ENCODE measurements at regions of chr4 and their contacts with region 1.

Region 1: GRCh38 chr4:89270792-89271191 is 36.8 kb downstream of the GPRIN3 start:
- DNase-seq: no peak
- H3K4me3 Mint-ChIP-seq: no peak overlapping the region
- H3K27ac Mint-ChIP-seq: peak overlapping the region; percentile 55
- H3K4me1 Mint-ChIP-seq: peaks cover 82% of the 10 kb centered on the region
- H3K27me3 Mint-ChIP-seq: no peaks in the 10 kb centered on the region

Region 2: DNA sequence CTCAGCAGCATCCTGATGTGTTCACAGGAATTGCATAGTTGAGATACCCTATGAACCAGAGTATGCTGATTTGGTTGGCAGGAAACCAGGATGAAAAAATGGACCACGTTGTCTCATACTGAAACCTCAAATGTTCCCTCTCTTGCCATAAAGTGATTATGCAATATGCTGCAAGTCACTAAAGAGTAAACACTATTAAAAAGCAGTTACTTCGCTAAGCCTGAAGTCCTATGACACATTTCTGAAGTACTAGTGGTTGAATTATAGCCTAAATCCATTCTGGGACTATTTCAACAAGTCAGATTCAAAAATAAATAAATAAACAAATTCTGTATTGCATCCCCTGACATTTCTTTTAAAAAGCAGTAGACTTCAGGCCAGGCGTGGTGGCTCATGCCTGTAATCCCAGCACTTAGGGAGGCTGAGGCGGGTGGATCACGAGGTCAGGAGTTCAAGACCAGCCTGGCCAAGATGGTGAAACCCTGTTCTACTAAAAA is 467.1 kb before region 1 on chr4:
- intact Hi-C with region 1: no loop called
- DNase-seq: peak; percentile 17
- H3K4me3 Mint-ChIP-seq: no peak overlapping the region
- H3K27ac Mint-ChIP-seq: no peak overlapping the region
- H3K4me1 Mint-ChIP-seq: peaks cover 13% of the 10 kb centered on the region
- H3K27me3 Mint-ChIP-seq: peaks cover 16% of the 10 kb centered on the region

Region 3: GRCh38 chr4:89101256-89102161 is 169.3 kb before region 1 on chr4:
- intact Hi-C with region 1: no loop called
- DNase-seq: no peak
- H3K4me3 Mint-ChIP-seq: no peak overlapping the region
- H3K27ac Mint-ChIP-seq: peak overlapping the region; percentile 10
- H3K4me1 Mint-ChIP-seq: peaks cover 15% of the 10 kb centered on the region
- H3K27me3 Mint-ChIP-seq: peaks cover 2% of the 10 kb centered on the region

Region 4: GRCh38 chr4:89254847-89255246 is 15.9 kb before region 1 on chr4:
- intact Hi-C with region 1: no loop called
- DNase-seq: peak; percentile 13
- H3K4me3 Mint-ChIP-seq: no peak overlapping the region
- H3K27ac Mint-ChIP-seq: peak overlapping the region; percentile 68
- H3K4me1 Mint-ChIP-seq: peaks cover 76% of the 10 kb centered on the region
- H3K27me3 Mint-ChIP-seq: no peaks in the 10 kb centered on the region

Region 5: DNA sequence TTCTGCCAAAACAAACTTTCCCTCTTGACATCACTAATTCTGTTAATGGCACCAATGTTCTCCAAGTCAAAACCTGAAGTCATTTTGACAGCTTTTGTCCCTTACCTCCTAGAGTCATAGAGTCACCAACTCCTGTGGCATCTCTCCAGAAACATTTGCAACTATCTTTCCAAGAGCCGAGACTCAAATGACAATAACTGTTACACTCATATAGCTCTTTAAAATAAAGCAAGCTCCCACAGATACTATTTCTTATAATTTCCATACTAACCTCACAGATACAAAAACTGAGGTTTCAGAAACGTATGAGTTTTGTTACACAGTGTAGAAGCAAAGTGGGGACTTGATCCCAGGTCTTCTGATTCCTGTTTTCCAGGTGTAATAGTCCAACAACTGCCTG is 18.5 kb after region 1 on chr4:
- intact Hi-C with region 1: loop called (anchors 1 kb)
- DNase-seq: no peak
- H3K4me3 Mint-ChIP-seq: peak overlapping the region; percentile 38
- H3K27ac Mint-ChIP-seq: peak overlapping the region; percentile 85
- H3K4me1 Mint-ChIP-seq: peaks cover 96% of the 10 kb centered on the region
- H3K27me3 Mint-ChIP-seq: no peaks in the 10 kb centered on the region

Measured in activated T-helper 1 cell treated with anti-CD3 and anti-CD28 coated beads, Interleukin-12 subunit alpha, Interleukin-12 subunit beta, Interleukin-2, Interleukin-4 antibody, amounts not matched to agents 30 ng/mL and 10 ng/mL and 1 ng/mL, durations not matched to agents 14 hours and 24 hours and 36 hours (primary cell).